ENCODE measurements at regions of chr5 and their contacts with region 1.

Region 1: DNA sequence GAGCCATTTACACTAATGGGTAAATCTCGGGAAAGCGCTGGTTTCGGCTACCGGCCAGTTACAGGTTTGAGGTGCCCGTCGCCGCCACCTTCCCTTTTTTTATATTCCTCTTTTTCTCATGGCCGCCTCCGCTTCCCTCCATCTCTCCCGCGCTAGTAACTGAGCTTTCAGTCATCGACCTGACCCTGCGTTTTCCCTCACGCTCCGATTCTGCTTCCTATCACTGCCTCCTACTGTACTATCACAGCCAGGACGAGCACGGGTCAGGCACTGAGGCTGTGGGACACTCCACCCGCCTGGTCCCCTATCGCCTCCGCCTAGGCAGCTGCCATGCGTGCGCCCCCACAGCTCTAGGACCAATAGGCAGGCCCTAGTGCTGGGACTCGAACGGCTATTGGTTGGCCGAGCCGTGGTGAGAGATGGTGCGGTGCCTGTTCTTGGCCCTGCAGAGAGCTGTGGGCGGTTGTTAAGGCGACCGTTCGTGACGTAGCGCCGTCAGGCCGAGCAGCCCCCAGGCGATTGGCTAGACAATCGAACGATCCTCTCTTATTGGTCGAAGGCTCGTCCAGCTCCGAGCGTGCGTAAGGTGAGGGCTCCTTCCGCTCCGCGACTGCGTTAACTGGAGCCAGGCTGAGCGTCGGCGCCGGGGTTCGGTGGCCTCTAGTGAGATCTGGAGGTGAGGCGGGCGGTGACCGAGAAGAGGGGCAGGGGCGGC is at the start of gene HMGCR:
- DNase-seq: peak; percentile 98 to 99
- ATAC-seq: peak; percentile 98
- H3K4me3 ChIP-seq: peak within 1 kb of the TSS; percentile 88 to 97 (median 91)
- H3K27ac ChIP-seq: peak within 1 kb of the TSS; percentile 87 to 92 (median 90)
- H3K4me1 ChIP-seq: peaks cover 9 to 15% of the 10 kb centered on the region in 2 donors
- H3K27me3 ChIP-seq: no peaks in the 10 kb centered on the region
- CTCF ChIP-seq: no peak
- POLR2A ChIP-seq: peak; percentile 66 to 67
- total RNA-seq, gene HMGCR: 3.2 to 21.1 (median 5.5) TPM

Region 2: GRCh38 chr5:74684900-74685851 is 651.6 kb before region 1 on chr5 and contains the start of gene HEXB:
- in situ Hi-C with region 1: no loop called
- intact Hi-C with region 1: loop called (anchors 5 kb)
- DNase-seq: peak; percentile 80 to 83
- ATAC-seq: peak; percentile 90 to 91
- H3K4me3 ChIP-seq: peak within 1 kb of the TSS; percentile 84 to 96 (median 92)
- H3K27ac ChIP-seq: peak within 1 kb of the TSS; percentile 83 to 90 (median 89)
- H3K4me1 ChIP-seq: peaks cover 7 to 12% of the 10 kb centered on the region in 2 donors
- H3K27me3 ChIP-seq: no peaks in the 10 kb centered on the region
- CTCF ChIP-seq: peak in 1 of 5 experiments; percentile 4
- POLR2A ChIP-seq: peak; percentile 84 to 86
- total RNA-seq, gene HEXB: 32.3 to 54.4 (median 47.1) TPM

Region 3: DNA sequence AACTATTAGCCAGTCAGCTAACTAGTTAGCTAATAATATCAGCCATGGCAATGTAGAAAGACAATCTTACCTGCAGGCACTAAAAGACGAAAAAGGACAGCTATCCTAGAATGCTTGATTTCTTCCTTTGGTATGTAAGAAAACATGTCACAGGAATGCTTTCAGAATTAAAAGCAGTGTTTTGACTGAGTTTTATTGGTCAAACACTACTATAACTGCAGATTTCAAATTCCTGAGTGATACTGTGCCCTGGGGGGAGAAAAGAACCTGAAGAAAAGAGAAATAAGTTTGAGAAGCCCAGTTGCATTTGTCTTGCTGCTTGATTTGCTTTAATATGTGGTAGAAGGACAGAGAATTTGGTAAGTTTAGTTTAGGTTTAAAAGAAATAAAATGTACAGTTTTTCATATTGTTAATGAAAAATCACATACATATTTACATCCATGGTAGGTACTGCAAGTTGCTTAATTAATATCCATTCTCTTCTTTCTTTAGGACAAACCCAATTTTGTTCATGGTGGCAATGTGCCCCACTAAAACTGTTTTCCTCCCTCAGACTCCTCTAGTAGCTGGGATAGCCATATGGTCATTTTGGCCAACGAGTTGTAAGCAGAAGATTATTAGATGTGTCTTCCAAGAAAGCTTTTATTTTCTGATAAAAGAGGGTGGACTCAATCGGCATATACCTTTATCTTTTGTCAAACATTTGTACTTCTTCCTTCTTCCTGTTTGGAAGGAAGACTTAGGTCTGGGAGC is 466.3 kb before region 1 on chr5:
- in situ Hi-C with region 1: no loop called
- intact Hi-C with region 1: no loop called
- DNase-seq: no peak
- ATAC-seq: no peak
- H3K4me3 ChIP-seq: no peak overlapping the region
- H3K27ac ChIP-seq: no peak overlapping the region
- H3K4me1 ChIP-seq: no peaks in the 10 kb centered on the region
- H3K27me3 ChIP-seq: peaks cover 8 to 23% (median 18%) of the 10 kb centered on the region in 3 donors
- CTCF ChIP-seq: no peak
- POLR2A ChIP-seq: no peak

Region 4: GRCh38 chr5:75053304-75054133 is 283.3 kb before region 1 on chr5:
- in situ Hi-C with region 1: no loop called
- intact Hi-C with region 1: loop called (anchors 1 kb)
- DNase-seq: peak; percentile 11 to 54
- ATAC-seq: peak; percentile 58 to 65
- H3K4me3 ChIP-seq: peak overlapping the region; percentile 74 to 86 (median 77)
- H3K27ac ChIP-seq: peak overlapping the region; percentile 75 to 87 (median 86)
- H3K4me1 ChIP-seq: peaks cover 11 to 15% of the 10 kb centered on the region in 2 donors
- H3K27me3 ChIP-seq: no peaks in the 10 kb centered on the region
- CTCF ChIP-seq: no peak
- POLR2A ChIP-seq: peak; percentile 41 to 50

Region 5: GRCh38 chr5:75373862-75374261 is 37.1 kb after region 1 on chr5:
- in situ Hi-C with region 1: no loop called
- intact Hi-C with region 1: no loop called
- DNase-seq: no peak
- ATAC-seq: no peak
- H3K4me3 ChIP-seq: no peak overlapping the region
- H3K27ac ChIP-seq: no peak overlapping the region
- H3K4me1 ChIP-seq: no peaks in the 10 kb centered on the region
- H3K27me3 ChIP-seq: no peaks in the 10 kb centered on the region
- CTCF ChIP-seq: no peak
- POLR2A ChIP-seq: no peak

Region 6: DNA sequence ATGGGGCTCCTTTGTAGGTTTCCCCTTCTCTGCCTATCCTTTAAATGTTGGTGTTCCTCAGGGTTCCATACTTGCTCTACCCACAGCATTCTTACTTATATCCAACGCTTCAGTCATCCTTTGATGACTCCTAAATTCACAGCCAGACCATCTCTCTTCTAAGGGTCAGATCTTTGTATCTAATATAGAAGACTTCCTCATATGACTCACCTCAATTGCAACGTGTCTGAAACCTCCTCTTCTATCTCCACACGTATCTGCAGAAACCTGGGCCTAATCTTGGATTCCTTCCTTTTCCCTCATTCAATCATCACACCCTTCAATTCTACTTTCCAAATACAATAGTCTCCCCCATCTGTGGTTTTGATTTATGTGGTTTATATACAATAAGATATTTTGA is 68.5 kb after region 1 on chr5:
- in situ Hi-C with region 1: no loop called
- intact Hi-C with region 1: no loop called
- DNase-seq: no peak
- ATAC-seq: no peak
- H3K4me3 ChIP-seq: no peak overlapping the region
- H3K27ac ChIP-seq: no peak overlapping the region
- H3K4me1 ChIP-seq: no peaks in the 10 kb centered on the region
- H3K27me3 ChIP-seq: no peaks in the 10 kb centered on the region
- CTCF ChIP-seq: no peak
- POLR2A ChIP-seq: no peak

Region 7: DNA sequence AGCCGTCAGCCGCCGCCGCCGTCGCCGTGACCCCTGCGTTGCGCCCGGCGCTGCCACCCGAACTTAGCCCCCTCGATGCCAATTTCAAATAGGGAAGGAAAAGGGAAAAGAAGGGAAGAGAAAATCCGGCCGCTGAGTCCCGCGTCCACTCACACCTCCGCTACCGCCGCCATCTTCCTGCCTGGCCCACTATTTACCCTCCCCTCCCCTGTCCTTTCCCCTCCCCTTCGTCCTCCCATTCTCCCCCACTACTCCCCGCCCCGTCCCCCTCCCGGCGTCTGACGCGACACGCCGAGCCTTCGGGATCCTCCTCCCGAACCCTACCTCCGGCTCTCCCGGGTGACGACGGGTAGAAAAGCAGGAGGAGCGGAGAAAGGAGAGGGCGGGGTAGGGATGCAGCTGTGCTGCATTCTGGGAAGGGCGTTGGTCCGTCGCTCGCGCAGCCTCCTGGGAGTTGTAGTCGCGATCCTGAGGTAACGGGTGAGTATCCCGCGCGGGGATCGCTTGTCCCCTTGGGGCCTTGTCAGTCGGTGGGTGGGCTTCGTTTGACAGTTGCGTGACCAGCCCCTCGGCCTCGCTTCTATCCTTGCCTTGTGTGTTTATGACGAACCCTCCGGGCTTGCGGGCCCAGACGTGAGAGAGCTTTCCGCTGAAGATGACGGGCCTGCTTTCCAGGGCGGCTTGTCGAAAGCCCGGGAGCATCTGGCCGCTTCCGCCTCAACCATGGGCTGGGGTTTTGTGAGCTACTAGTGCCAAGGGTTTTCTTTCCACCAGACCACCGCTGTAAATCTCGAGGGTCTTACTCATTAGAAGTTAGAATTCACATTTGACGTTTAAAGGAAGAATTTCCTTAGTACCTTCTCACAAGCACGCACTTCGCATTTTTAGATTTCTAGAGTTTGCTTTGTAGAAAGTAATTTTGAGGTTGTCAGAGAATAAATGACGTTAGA is 174.9 kb after region 1 on chr5 and contains the starts of genes CERT1 and POLK:
- in situ Hi-C with region 1: loop called in 2 of 4 experiments (anchors 25 kb)
- intact Hi-C with region 1: loop called (anchors 1 kb)
- DNase-seq: peak; percentile 98
- ATAC-seq: peak; percentile 89 to 91
- H3K4me3 ChIP-seq: peak within 1 kb of the TSS; percentile 87 to 97 (median 94)
- H3K27ac ChIP-seq: peak within 1 kb of the TSS; percentile 92 to 99 (median 96)
- H3K4me1 ChIP-seq: peaks cover 46 to 49% of the 10 kb centered on the region in 2 donors
- H3K27me3 ChIP-seq: no peaks in the 10 kb centered on the region
- CTCF ChIP-seq: no peak
- POLR2A ChIP-seq: peak; percentile 84 to 90
- total RNA-seq, gene CERT1: 30.8 to 50.6 (median 41.9) TPM
- total RNA-seq, gene POLK: 23.9 to 35.8 (median 27.8) TPM

Region 8: GRCh38 chr5:75717082-75717922 is 380.5 kb after region 1 on chr5 and contains the start of gene POC5:
- in situ Hi-C with region 1: no loop called
- intact Hi-C with region 1: loop called (anchors 10 kb)
- DNase-seq: peak; percentile 91 to 97
- ATAC-seq: peak; percentile 100
- H3K4me3 ChIP-seq: peak within 1 kb of the TSS; percentile 81 to 85 (median 84)
- H3K27ac ChIP-seq: peak within 1 kb of the TSS; percentile 82 to 88 (median 86)
- H3K4me1 ChIP-seq: peaks cover 5 to 11% of the 10 kb centered on the region in 2 donors
- H3K27me3 ChIP-seq: no peaks in the 10 kb centered on the region
- CTCF ChIP-seq: no peak
- POLR2A ChIP-seq: peak; percentile 61 to 64
- total RNA-seq, gene POC5: 4.1 to 7.3 (median 5.4) TPM